ENCODE measurements at regions of chr6 and their contacts with region 1.

Region 1: GRCh38 chr6:106783631-106784566 is 154.5 kb downstream of the QRSL1 start:
- DNase-seq: no peak
- H3K4me3 ChIP-seq: no peak overlapping the region
- CTCF ChIP-seq: no peak

Region 2: DNA sequence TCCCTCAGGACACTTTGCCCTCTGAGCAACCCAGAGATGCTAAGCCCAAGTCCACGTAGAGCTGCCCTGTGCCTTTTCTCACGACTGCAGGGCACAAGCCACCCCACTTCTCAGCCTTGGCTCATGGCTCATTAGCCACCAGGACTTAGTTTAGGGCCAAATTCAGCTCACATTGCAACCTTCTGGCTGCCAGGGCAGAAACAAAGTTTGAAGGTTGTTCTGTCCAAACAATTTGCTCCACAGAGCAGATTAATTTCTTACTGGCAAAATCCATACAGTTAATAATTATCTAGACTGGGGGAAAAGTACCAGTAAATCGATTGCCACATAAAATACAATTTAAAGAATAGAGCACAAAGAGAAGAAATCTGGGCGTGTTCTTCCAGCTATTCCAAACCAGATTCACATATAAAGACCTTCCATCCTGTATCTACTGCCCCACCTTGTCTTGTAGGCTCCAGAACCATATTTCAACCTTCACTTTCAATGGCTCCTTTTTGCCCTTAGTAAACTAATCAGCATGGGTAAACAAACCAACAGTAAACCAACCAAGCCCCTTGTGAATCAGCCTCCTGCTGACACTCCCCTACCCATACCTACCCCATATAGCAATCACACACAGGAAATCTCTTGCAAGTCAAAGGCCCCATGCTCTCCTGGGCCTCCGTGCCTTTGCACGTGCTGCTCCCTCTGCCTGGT is 52.6 kb before region 1 on chr6:
- in situ Hi-C with region 1: loop called (anchors 5 kb)
- DNase-seq: no peak
- H3K4me3 ChIP-seq: no peak overlapping the region
- CTCF ChIP-seq: no peak

Region 3: DNA sequence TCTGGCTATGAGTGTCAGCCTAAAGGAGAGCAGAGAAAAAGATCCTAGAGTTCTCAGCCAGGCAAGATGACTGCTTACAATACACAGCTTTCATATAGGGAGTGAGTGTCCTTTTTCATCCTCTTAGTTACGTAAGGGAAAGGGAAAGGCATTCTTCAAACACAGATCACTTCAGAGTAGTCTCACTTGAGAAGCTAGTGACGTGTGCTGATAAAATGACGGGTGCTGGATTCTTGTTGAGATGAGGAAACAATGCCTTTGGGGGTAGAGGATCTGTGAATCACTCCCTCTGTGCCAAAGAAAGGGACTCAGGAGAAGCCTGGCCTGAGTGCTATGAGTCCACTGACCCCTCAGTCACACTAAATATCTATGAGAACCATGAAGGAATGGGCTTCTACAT is 37.2 kb before region 1 on chr6:
- in situ Hi-C with region 1: no loop called
- DNase-seq: no peak
- H3K4me3 ChIP-seq: no peak overlapping the region
- CTCF ChIP-seq: no peak

Region 4: DNA sequence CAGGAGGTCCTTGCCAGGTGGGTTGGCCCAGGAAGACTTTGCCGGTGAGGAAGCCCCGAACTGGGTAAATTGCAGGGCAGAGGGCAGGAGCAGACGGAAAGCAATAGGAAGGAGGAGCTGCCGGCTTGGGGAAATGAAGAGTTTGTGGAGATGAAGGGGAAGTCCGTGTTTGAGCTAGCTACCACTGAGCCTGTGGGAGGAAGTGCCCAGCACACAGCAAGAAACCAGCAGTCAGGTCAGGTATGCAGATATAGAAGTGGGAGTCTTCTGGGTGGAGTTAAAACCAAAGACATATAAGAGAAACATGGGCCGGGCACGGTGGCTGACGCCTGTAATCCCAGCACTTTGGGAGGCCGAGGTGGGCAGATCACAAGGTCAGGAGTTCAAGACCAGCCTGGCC is 155.9 kb after region 1 on chr6:
- in situ Hi-C with region 1: no loop called
- DNase-seq: no peak
- H3K4me3 ChIP-seq: no peak overlapping the region
- CTCF ChIP-seq: no peak

Measured in astrocyte of the cerebellum (primary cell).